Activated CD8-positive, alpha-beta memory T cell treated with anti-CD3 and anti-CD28 coated beads, Interleukin-2, amount 10 ng/mL, durations not matched to agents 7 days and 5 days (primary cell): ENCODE measurements at regions of chrX and their contacts with region 1.

Region 1: DNA sequence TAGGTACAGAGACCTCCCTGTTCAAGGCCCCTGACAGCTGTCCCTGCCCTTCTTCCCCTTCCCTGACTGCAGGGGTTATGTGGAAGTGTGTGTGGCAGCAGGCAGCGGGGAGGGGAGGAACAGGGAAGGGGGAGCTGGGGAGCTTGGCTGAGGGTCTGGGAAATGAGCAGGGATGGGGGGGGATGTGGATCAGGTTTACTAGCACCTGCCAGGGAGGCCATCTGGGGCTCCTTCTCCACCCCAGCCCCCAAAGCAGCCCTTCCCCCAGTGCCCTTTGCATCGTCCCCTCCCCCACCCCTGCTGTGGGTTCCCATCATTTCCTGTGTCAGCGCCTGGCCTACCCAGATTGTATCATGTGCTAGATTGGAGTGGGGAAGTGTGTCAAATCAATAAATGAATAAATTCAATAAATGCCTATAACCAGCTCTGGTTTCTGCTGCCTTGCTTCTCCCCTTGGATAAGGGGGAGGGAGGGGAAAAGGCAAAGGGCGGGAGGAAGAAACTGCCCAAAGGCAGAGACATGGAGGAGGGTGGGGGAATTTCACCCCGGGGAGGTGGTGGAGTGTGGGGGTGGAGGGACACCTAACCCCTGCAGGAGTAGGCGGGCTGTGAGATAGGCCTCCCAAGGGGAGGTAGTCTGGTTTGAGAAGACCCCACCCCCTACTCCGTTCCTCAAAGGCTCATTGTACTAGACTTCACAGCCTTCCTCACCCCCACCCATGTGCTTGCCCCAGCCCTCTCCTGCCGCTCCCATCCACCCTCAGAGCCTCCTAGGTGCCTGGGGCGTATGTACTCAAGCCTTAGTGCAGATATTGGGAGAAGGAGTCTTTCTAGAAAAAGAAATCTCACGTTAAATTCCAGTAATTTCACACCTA is 3.2 kb downstream of the CXorf65 start:
- DNase-seq: peak; percentile 76
- ATAC-seq: peak; percentile 29
- H3K4me3 Mint-ChIP-seq: peak overlapping the region; percentile 70
- H3K27ac Mint-ChIP-seq: peak overlapping the region; percentile 89
- H3K4me1 Mint-ChIP-seq: peaks cover 71% of the 10 kb centered on the region
- H3K27me3 Mint-ChIP-seq: no peaks in the 10 kb centered on the region

Region 2: GRCh38 chrX:70834587-70834986 is 268.8 kb before region 1 on chrX:
- CTCF ChIA-PET with region 1: no interaction called
- DNase-seq: no peak
- ATAC-seq: no peak
- H3K4me3 Mint-ChIP-seq: no peak overlapping the region
- H3K27ac Mint-ChIP-seq: no peak overlapping the region
- H3K4me1 Mint-ChIP-seq: no peaks in the 10 kb centered on the region
- H3K27me3 Mint-ChIP-seq: peaks cover 6% of the 10 kb centered on the region

Region 3: DNA sequence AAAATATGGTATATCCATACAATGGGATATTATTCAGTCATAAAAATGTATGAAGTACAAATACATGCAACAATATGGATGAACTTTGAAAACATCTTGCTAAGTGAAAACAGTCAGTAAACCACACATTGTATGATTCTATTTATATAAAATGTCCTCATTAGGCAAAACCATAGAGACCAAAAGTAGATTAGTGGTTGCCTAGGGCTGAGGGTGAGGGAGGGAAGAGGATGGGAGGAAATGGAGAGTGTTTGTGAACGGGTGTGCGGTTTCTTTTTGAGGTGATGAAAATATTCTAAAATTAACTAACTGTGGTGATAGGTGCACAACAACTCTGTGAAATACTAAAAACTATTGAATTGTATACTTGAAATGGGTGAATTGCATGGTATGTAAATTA is 224.4 kb before region 1 on chrX:
- CTCF ChIA-PET with region 1: no interaction called
- DNase-seq: peak; percentile 39
- ATAC-seq: peak; percentile 27
- H3K4me3 Mint-ChIP-seq: no peak overlapping the region
- H3K27ac Mint-ChIP-seq: no peak overlapping the region
- H3K4me1 Mint-ChIP-seq: peaks cover 7% of the 10 kb centered on the region
- H3K27me3 Mint-ChIP-seq: peaks cover 5% of the 10 kb centered on the region

Region 4: DNA sequence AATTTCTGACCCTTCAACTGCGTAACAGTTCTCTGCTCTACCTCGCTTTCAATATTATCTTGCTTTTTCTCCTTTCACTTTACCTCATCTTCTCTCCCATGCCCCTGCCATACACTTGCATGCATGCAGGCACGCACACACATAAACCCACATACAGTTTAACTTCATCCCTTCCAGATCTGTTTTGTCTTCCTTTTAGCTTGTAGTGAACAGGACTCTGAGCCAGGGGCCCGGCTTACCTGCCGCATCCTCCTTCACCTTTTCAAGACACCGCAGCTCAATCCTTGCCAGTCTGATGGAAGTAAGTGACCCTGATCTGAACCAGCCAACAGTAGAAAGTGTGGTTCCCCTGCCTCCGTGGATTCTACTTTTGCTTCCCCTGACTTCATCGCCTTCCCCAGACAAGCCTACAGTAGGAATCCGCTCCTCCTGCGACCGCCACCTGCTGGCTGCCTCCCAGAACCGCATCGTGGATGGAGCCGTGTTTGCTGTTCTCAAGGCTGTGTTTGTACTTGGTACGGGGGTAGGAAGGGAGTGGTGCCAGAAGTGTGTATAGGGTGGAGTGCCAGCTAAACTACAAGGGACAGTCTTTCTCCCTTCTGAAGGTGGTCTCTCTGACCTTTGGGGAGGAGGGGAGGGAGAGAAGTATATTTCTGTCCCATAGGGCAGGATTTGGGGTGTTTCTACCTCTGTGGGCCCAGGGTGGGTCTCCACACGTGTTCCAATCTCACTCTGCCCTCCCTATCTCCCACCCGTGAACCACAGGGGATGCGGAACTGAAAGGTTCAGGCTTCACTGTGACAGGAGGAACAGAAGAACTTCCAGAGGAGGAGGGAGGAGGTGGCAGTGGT is 25.8 kb after region 1 on chrX:
- CTCF ChIA-PET with region 1: interaction called, 65 read pairs
- DNase-seq: peak; percentile 80
- ATAC-seq: peak; percentile 95
- H3K4me3 Mint-ChIP-seq: no peak overlapping the region
- H3K27ac Mint-ChIP-seq: peak overlapping the region; percentile 84
- H3K4me1 Mint-ChIP-seq: peaks cover 21% of the 10 kb centered on the region
- H3K27me3 Mint-ChIP-seq: no peaks in the 10 kb centered on the region